ENCODE measurements at regions of chr6 and their contacts with region 1.

Region 1: GRCh38 chr6:26285143-26286134 is 79.6 kb upstream of the BTN3A2 start:
- DNase-seq: peak; percentile 80
- H3K4me3 ChIP-seq: peak overlapping the region; percentile 78 to 89
- H3K27ac ChIP-seq: peak overlapping the region; percentile 95 to 98
- H3K4me1 ChIP-seq: no peaks in the 10 kb centered on the region; a peak in 2 of 4 replicates
- H3K27me3 ChIP-seq: no peaks in the 10 kb centered on the region
- CTCF ChIP-seq: no peak
- EP300 ChIP-seq: peak; percentile 84 to 99
- RAD21 ChIP-seq: 0 out of 2 replicates have a peak, but pooled peaks have one; percentile 4

Region 2: DNA sequence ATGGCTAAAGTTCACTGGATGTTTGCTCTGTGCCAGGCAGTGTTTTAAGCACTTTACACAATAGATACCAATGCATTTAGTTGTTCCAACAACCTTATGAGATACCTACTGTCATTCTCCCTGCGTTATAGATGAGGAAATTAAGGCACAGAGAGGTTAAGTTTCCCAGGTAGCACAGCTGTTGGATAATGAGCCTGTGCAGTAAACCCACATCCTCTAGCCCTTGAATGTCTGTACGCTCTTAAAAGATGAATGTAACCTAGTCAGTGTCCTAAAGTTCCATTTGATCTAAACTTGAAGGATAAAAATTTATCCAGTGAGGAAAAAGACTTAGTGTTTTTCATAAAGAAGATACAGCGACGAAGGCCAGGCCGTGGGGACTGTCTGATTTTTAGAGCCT is 170.2 kb before region 1 on chr6:
- CTCF ChIA-PET with region 1: no interaction called
- POLR2A ChIA-PET with region 1: no interaction called
- DNase-seq: no peak
- H3K4me3 ChIP-seq: no peak overlapping the region
- H3K27ac ChIP-seq: no peak overlapping the region
- H3K4me1 ChIP-seq: peaks cover 0 to 2% of the 10 kb centered on the region in 2 experiments; a peak in 2 of 4 replicates
- H3K27me3 ChIP-seq: no peaks in the 10 kb centered on the region
- CTCF ChIP-seq: no peak
- EP300 ChIP-seq: no peak
- RAD21 ChIP-seq: no peak

Region 3: GRCh38 chr6:26204332-26205165 is 80.9 kb before region 1 on chr6:
- CTCF ChIA-PET with region 1: no interaction called
- POLR2A ChIA-PET with region 1: interaction called, 10 read pairs
- DNase-seq: peak; percentile 83
- H3K4me3 ChIP-seq: peak overlapping the region; percentile 69 to 95
- H3K27ac ChIP-seq: peak overlapping the region; percentile 97 to 99
- H3K4me1 ChIP-seq: peaks cover 4 to 13% of the 10 kb centered on the region in 2 experiments; a peak in 3 of 4 replicates
- H3K27me3 ChIP-seq: no peaks in the 10 kb centered on the region
- CTCF ChIP-seq: peak; percentile 49
- EP300 ChIP-seq: peak; percentile 88 to 97
- RAD21 ChIP-seq: no peak

Region 4: GRCh38 chr6:26234421-26235296 is 50.8 kb before region 1 on chr6:
- CTCF ChIA-PET with region 1: no interaction called
- POLR2A ChIA-PET with region 1: interaction called, 27 read pairs
- DNase-seq: peak; percentile 73
- H3K4me3 ChIP-seq: peak overlapping the region; percentile 61 to 72
- H3K27ac ChIP-seq: peak overlapping the region; percentile 77 to 85
- H3K4me1 ChIP-seq: peaks cover 0 to 3% of the 10 kb centered on the region in 2 experiments; a peak in 3 of 4 replicates
- H3K27me3 ChIP-seq: no peaks in the 10 kb centered on the region
- CTCF ChIP-seq: no peak
- EP300 ChIP-seq: peak in 1 of 2 experiments; percentile 52; a peak in 1 of 4 replicates
- RAD21 ChIP-seq: no peak

Region 5: DNA sequence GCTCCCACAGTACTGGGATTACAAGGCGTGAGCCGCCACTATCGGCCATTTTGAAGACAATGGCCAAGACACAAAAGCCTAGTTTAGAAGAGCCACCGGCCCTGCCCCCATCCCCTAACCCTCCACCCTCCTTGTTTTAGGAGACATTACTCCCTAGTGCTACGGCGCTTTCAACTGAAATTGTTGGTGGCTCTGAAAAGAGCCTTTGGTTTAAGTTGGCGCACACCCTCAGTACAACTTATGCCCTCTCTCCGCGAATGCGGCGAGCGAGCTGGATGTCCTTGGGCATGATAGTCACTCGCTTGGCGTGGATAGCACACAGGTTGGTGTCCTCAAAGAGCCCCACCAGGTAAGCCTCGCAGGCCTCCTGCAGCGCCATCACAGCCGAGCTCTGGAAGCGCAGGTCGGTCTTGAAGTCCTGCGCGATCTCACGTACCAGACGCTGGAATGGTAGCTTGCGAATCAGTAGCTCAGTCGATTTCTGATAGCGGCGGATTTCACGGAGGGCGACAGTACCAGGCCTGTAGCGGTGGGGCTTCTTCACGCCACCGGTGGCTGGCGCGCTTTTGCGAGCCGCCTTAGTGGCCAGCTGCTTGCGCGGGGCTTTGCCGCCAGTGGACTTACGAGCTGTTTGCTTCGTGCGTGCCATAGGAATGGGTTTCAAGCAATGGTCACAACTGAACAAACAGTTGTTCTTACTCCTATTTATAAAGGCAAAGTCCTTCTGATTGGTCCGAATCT is 35.3 kb before region 1 on chr6:
- CTCF ChIA-PET with region 1: no interaction called
- POLR2A ChIA-PET with region 1: interaction called, 41 read pairs
- DNase-seq: peak; percentile 58
- H3K4me3 ChIP-seq: peak overlapping the region; percentile 88 to 92
- H3K27ac ChIP-seq: peak overlapping the region; percentile 85 to 97
- H3K4me1 ChIP-seq: peaks cover 0 to 7% of the 10 kb centered on the region in 2 experiments; a peak in 3 of 4 replicates
- H3K27me3 ChIP-seq: no peaks in the 10 kb centered on the region
- CTCF ChIP-seq: peak; percentile 54
- EP300 ChIP-seq: 0 out of 4 replicates have a peak, but pooled peaks of 1 of the 2 experiments have one; percentile 12
- RAD21 ChIP-seq: no peak; the same call in 1 of the 2 replicates

Region 6: DNA sequence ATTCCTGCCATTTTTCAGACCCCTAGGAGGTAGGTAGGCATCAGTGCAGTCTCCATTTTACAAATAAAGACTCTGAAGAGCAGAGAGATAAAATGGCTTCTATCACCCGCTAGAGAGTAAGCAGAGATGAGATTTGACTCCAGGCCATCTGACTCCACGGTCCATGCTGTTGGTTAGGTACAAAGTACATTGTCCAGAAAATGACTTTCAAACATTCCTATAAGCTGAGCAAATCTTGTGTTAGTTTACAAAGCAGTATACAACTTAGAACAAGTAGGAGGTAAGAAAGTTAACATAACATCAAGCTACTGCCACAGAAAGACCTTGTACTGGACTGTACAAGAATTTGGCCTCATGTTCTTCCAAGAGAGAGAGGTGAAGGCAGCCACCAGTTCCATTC is 229.5 kb after region 1 on chr6:
- CTCF ChIA-PET with region 1: no interaction called
- POLR2A ChIA-PET with region 1: no interaction called
- DNase-seq: no peak
- H3K4me3 ChIP-seq: no peak overlapping the region
- H3K27ac ChIP-seq: no peak overlapping the region
- H3K4me1 ChIP-seq: no peaks in the 10 kb centered on the region; a peak in 1 of 4 replicates
- H3K27me3 ChIP-seq: no peaks in the 10 kb centered on the region
- CTCF ChIP-seq: no peak
- EP300 ChIP-seq: no peak
- RAD21 ChIP-seq: no peak

Measured in SK-N-SH (cell line).